Common myeloid progenitor, CD34-positive (primary cell): ENCODE measurements at regions of chr1 and their contacts with region 1.

Region 1: DNA sequence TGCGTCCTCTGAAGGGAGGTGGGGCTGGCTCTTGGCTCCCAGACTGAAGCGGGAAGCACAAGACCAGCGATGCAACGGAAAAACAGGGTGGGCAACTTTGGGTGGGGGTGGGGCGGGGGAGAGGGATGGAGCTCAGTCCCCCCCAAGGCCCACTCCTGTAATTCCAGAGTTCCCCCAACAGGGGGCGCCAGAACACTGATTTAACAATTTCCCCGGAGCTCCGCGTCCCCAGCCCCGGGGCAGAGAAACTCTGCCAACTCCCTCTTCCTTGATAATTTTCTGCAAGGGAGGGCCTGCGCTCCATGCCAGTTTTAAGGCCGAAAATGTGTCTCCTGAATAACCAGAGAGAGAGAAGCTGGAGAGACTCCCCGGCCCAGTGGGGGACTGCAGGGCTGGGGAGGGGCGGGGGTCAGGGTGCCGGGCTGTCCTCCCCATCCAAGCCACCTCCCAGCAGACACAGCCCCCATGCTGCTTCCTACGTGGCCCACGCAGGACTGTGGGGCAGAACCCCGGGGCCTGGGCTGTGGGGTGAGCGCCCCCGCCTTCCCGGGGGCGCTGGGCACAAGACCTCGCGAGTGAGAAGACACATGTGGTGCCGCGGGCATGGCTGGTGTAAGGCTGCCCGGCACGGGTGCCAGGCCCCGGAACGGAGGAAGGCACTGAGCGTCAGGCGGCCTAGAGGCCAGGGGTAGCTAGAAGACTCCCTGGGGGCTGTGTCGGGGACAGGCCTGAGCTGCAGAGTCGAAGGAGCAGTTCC is 51.4 kb downstream of the KIF21B start:
- DNase-seq: peak; percentile 53 to 72 (median 64)
- H3K4me3 ChIP-seq: no peak overlapping the region
- H3K27ac ChIP-seq: no peak overlapping the region
- H3K4me1 ChIP-seq: no peaks in the 10 kb centered on the region
- H3K27me3 ChIP-seq: no peaks in the 10 kb centered on the region

Region 2: GRCh38 chr1:200890818-200891773 is 81.0 kb before region 1 on chr1:
- CTCF ChIA-PET with region 1: no interaction called
- POLR2A ChIA-PET with region 1: no interaction called
- DNase-seq: peak; percentile 17 to 31 (median 26)
- H3K4me3 ChIP-seq: peak overlapping the region; percentile 11 to 66 (median 54)
- H3K27ac ChIP-seq: no peak overlapping the region
- H3K4me1 ChIP-seq: peaks cover 0 to 64% (median 38%) of the 10 kb centered on the region in 4 experiments
- H3K27me3 ChIP-seq: peaks cover 0 to 50% (median 32%) of the 10 kb centered on the region in 5 experiments

Region 3: GRCh38 chr1:200990114-200990513 is 18.0 kb after region 1 on chr1:
- CTCF ChIA-PET with region 1: interaction called, 45 read pairs
- POLR2A ChIA-PET with region 1: no interaction called
- DNase-seq: no peak
- H3K4me3 ChIP-seq: no peak overlapping the region
- H3K27ac ChIP-seq: no peak overlapping the region
- H3K4me1 ChIP-seq: peaks cover 0 to 11% (median 0%) of the 10 kb centered on the region in 4 experiments
- H3K27me3 ChIP-seq: no peaks in the 10 kb centered on the region

Region 4: DNA sequence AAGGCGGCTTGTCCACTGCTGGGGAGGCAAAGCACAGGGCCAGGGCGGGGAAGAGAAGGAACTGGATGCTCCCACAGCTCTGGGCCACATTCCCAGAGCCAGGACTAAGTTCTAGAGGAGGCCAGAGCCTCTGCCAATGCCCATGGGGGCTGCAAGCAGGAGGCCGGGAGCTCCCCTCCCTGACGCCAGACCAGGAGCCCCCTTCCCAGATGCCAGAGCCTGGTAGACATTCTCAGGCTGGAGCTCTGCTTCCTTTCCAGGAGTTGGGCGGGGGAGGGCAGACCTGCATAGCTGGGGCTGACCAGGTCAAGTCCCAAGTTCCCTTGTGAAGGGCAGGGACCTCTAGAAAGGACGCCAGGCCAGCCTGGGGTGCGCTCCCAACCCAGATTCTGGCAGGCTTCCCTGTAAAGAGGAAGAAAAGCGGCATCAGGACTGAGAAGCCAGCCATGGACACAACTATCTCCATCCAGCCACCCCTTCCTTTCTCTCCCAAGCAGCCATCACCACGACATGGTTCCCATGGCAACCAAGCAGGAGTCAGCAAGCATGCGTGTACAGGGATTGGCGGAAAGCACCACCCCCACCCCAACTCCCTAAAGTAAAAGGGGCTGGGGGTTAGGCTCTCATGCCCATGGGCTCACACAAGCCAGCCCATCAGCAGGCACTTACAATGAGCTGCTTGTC is 38.0 kb after region 1 on chr1:
- CTCF ChIA-PET with region 1: interaction called, 12 read pairs
- POLR2A ChIA-PET with region 1: no interaction called
- DNase-seq: no peak
- H3K4me3 ChIP-seq: no peak overlapping the region
- H3K27ac ChIP-seq: no peak overlapping the region
- H3K4me1 ChIP-seq: peaks cover 1 to 33% (median 22%) of the 10 kb centered on the region in 4 experiments
- H3K27me3 ChIP-seq: no peaks in the 10 kb centered on the region

Region 5: DNA sequence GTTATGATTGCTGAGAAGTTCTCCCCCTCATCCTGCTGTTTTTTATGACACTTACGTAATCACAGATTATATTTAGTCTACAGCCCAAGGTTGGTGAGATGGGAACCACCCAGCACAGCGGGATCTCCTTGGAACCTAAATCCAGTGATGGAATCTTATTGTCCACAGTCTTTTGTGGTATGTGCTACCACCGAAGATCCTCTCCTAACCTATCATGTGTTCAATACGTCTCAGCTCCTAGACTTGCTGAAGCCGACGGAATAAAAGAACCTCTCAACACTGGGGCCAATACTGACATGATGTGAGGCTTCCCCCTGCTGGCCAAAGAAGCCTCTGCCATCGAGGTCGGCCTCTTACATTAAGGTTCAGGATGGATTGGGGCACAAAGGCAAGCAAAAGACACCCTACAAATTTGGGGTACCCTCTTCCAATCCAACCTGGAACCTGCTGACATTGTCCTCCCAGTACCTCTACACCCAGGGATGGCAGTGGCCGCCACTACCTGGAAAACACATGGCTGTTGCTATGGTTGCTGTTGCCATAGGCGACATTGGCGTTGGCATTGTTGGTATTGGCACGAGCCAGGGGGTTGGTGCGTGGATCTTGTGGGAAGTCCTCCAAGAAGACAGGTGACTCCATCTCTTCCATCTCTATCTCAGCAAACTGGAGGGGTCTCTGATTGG is 70.8 kb after region 1 on chr1:
- CTCF ChIA-PET with region 1: interaction called, 221 read pairs
- POLR2A ChIA-PET with region 1: interaction called, 3 read pairs
- DNase-seq: peak; percentile 71 to 88 (median 82)
- H3K4me3 ChIP-seq: no peak overlapping the region
- H3K27ac ChIP-seq: no peak overlapping the region
- H3K4me1 ChIP-seq: peaks cover 0 to 2% (median 0%) of the 10 kb centered on the region in 4 experiments
- H3K27me3 ChIP-seq: peaks cover 0 to 6% (median 3%) of the 10 kb centered on the region in 5 experiments

Region 6: GRCh38 chr1:201114236-201115131 is 142.4 kb after region 1 on chr1:
- CTCF ChIA-PET with region 1: interaction called, 14 read pairs
- POLR2A ChIA-PET with region 1: no interaction called
- DNase-seq: peak; percentile 90 to 93 (median 93)
- H3K4me3 ChIP-seq: peak overlapping the region; percentile 56 to 80 (median 69)
- H3K27ac ChIP-seq: no peak overlapping the region
- H3K4me1 ChIP-seq: peaks cover 0 to 14% (median 10%) of the 10 kb centered on the region in 4 experiments
- H3K27me3 ChIP-seq: peaks cover 0 to 27% (median 16%) of the 10 kb centered on the region in 5 experiments